Left colon (tissue), 2 donors: ENCODE measurements at regions of chr1 and their contacts with region 1.

Region 1: DNA sequence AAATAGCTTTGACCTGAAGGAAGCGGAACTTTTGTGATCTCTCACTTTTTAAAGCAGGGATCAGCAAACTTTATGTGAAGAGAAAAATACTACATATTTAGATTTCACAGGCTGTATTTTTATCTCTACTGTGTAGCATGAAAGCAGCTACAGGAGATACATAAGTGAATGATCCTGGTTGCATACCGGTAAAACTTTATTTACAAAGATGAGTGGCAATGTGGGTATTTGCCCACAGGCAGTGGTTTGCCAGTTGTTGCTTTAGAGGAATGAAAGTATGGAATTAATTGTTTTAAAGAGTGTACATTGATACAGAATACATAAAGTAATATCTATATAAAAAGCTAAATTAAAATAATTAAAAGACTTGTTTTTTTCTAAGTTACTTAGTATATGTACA is 17.8 kb downstream of the ODR4 start:
- DNase-seq: no peak
- ATAC-seq: no peak

Region 2: DNA sequence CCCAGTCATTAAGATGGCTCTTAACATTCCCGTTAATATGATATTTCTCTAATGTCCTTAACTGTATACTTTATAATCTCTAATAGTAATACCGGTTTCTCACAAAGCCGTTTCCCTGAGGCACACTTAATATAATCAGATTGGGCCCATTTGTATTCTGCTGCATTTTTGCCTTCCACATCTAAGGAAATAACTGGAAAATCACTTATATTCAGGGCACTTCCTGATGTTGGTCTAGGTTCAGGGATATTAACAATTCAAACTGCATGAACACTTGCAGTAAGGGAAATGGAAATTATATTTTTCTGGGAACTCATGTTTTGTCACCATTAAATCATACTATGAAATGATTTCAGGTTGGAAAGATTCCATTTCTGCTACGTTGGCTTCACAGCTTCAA is 138.2 kb before region 1 on chr1:
- intact Hi-C with region 1: no loop called
- DNase-seq: no peak
- ATAC-seq: no peak

Region 3: DNA sequence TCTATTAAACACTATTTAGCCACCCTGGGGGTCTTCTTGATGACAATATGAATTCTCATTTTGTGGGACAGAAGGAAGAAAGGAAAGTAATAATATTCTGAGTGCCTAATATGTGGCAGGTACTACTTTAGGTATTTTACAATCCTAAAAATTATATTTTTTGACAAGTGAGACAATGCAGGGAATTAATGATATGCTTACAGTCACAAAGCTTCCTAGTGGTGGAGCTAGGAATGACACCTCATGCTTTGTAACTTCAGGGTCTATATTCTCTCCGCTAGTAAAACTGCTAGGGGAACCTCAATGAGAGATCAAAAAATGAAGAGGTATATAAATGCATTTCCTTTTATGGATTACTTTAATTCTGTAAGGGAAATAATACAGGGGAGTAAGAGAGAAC is 62.7 kb before region 1 on chr1:
- intact Hi-C with region 1: loop called in 1 of 2 experiments (anchors 10 kb)
- DNase-seq: no peak
- ATAC-seq: no peak